ENCODE measurements at regions of chr3 and their contacts with region 1.

Region 1: DNA sequence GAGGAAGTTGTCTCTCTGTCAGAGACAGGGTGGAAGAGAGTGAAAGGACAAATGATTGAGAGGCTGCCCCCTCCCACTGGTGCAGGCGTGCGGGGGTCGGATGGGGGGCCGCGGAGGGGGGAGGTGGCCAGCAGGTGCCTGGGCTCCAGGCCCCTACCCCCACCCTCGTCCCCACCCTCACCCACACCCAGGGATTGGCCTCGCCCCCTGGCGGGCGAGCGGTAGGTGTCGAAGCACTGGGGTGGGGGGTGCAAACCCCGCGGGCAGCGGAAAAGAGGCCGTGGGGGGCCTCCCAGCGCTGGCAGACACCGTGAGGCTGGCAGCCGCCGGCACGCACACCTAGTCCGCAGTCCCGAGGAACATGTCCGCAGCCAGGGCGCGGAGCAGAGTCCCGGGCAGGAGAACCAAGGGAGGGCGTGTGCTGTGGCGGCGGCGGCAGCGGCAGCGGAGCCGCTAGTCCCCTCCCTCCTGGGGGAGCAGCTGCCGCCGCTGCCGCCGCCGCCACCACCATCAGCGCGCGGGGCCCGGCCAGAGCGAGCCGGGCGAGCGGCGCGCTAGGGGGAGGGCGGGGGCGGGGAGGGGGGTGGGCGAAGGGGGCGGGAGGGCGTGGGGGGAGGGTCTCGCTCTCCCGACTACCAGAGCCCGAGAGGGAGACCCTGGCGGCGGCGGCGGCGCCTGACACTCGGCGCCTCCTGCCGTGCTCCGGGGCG is at the start of gene KAT2B:
- DNase-seq: peak; percentile 77
- H3K4me3 Mint-ChIP-seq: peak within 1 kb of the TSS; percentile 95
- H3K27ac Mint-ChIP-seq: peak within 1 kb of the TSS; percentile 91
- H3K4me1 Mint-ChIP-seq: peaks cover 45% of the 10 kb centered on the region
- H3K27me3 Mint-ChIP-seq: peaks cover 5% of the 10 kb centered on the region
- total RNA-seq, gene KAT2B: 10.9 and 12.1 TPM in 2 replicates

Region 2: GRCh38 chr3:19399356-19399755 is 640.6 kb before region 1 on chr3:
- intact Hi-C with region 1: no loop called
- DNase-seq: no peak
- H3K4me3 Mint-ChIP-seq: no peak overlapping the region
- H3K27ac Mint-ChIP-seq: no peak overlapping the region
- H3K4me1 Mint-ChIP-seq: no peaks in the 10 kb centered on the region
- H3K27me3 Mint-ChIP-seq: no peaks in the 10 kb centered on the region

Region 3: GRCh38 chr3:19885468-19885867 is 154.5 kb before region 1 on chr3:
- intact Hi-C with region 1: loop called (anchors 1 kb)
- DNase-seq: no peak
- H3K4me3 Mint-ChIP-seq: no peak overlapping the region
- H3K27ac Mint-ChIP-seq: no peak overlapping the region
- H3K4me1 Mint-ChIP-seq: no peaks in the 10 kb centered on the region
- H3K27me3 Mint-ChIP-seq: peaks cover 7% of the 10 kb centered on the region

Region 4: DNA sequence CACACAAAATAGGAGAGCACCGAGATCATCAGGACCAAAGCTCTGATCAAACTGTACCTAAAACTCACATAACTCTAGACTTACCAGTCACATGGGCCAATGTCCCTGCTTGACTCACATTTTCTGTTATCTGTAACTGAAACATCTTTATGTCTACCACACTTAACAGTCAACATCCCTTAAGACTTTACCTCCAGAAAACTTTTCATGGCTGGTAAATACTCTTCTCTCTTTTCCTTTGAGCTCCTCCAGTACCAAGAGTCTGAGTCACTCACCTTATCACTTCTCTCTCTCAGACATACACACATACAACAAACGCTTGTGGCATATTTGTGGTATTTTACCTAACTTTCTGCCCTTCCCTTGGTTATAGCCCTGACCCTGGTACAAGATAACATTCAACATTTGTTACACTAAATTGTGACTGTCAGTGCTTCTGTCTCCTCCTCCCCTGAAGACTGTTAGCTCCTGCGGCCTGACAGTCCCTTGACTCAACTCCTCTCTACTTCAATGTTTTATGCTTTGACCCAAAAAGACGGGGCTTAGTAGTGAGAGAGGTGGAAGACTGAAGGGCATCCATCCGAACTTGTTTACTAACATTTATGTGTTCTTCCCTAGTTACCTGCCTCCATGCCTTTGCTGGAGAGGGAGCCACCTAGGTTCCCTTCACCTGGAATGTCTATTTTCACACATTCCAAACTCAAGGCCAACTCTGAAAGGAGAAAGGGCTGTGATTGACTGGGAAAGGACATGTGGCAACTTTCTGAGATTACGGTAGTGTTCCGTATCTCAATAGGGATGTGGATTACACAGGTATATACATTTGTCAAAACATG is 102.2 kb before region 1 on chr3:
- intact Hi-C with region 1: loop called (anchors 2 kb)
- DNase-seq: no peak
- H3K4me3 Mint-ChIP-seq: no peak overlapping the region
- H3K27ac Mint-ChIP-seq: peak overlapping the region; percentile 84
- H3K4me1 Mint-ChIP-seq: peaks cover 39% of the 10 kb centered on the region
- H3K27me3 Mint-ChIP-seq: peaks cover 6% of the 10 kb centered on the region

Region 5: GRCh38 chr3:19946832-19947548 is 92.9 kb before region 1 on chr3 and contains the start of gene RAB5A:
- intact Hi-C with region 1: loop called (anchors 1 kb)
- DNase-seq: peak; percentile 97
- H3K4me3 Mint-ChIP-seq: peak within 1 kb of the TSS; percentile 98
- H3K27ac Mint-ChIP-seq: peak within 1 kb of the TSS; percentile 98
- H3K4me1 Mint-ChIP-seq: peaks cover 29% of the 10 kb centered on the region
- H3K27me3 Mint-ChIP-seq: peaks cover 2% of the 10 kb centered on the region
- total RNA-seq, gene RAB5A: 43.5 and 49.5 TPM in 2 replicates

Region 6: GRCh38 chr3:20054549-20054987 is 14.6 kb after region 1 on chr3:
- intact Hi-C with region 1: loop called (anchors 1 kb)
- DNase-seq: peak; percentile 39
- H3K4me3 Mint-ChIP-seq: no peak overlapping the region
- H3K27ac Mint-ChIP-seq: no peak overlapping the region
- H3K4me1 Mint-ChIP-seq: peaks cover 25% of the 10 kb centered on the region
- H3K27me3 Mint-ChIP-seq: no peaks in the 10 kb centered on the region

Region 7: DNA sequence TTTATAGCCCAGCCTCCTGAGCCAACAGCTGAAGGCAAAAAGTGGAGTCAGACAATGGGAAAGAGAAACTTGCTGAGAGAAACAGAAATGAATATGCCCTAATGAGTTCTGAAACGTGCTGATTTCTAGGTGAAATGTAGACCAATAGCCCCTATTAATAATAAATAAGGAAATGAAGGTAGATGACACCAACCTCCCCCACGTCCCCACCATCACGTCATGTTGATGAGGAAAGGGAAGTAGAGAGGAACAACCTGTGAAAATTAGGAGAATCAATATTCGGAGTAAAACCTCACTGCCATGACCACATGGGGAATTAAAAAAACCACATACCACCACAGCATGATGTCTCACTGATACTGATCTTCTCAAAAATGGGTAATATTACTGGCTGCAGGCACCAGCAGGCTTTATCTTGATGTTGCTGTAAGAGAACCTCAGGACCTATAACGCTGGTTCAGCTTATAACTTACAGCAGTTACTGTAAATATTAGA is 64.3 kb after region 1 on chr3:
- intact Hi-C with region 1: loop called (anchors 1 kb)
- DNase-seq: peak; percentile 40
- H3K4me3 Mint-ChIP-seq: no peak overlapping the region
- H3K27ac Mint-ChIP-seq: peak overlapping the region; percentile 16
- H3K4me1 Mint-ChIP-seq: peaks cover 59% of the 10 kb centered on the region
- H3K27me3 Mint-ChIP-seq: no peaks in the 10 kb centered on the region